Breast epithelium (tissue), 4 donors: ENCODE measurements at regions of chr22 and their contacts with region 1.

Region 1: DNA sequence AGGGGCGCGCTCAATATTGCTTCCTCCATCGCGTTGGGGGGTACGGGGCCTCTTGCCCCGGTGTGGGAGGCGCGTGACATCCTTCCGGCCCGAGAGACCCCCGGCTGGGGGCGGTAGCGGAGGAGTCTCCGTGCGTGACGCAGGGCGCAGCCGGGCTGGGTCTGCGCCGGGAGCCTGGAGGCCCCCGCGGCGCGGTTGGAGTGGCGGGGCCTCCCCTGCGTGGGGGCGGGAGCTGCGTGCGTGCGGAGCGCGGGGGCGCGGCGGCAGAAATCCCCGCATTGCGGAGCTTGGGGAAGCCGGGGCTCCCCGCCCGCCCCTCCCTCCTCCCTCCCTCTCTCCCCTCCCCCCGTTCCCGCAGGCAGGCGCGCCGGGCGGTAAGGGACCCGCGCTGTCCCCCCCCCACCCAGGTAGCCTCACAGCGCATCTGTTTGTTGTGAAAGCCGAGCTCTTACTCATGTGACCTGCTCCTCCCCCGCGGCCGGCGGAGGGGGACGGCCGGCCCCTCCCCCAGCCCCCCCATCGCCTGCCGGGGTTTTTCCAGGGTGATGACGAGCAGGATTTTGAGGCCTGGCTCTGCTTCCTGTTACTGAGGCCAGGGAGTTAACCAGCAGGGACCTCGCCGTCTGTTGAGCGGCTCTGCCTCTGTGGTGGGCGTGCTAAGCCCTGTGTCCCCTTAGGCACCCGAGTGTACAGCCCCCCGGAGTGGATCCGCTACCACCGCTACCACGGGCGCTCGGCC is 1.6 kb downstream of the PIM3 start:
- DNase-seq: peak; percentile 94 to 95
- H3K4me3 ChIP-seq: peak overlapping the region; percentile 73 to 95 (median 92)
- H3K27ac ChIP-seq: peak overlapping the region; percentile 96 to 99
- H3K4me1 ChIP-seq: peaks cover 36 to 49% of the 10 kb centered on the region in 2 donors
- H3K27me3 ChIP-seq: no peaks in the 10 kb centered on the region
- CTCF ChIP-seq: peak in 1 of 3 donors; percentile 21
- POLR2A ChIP-seq: no peak

Region 2: GRCh38 chr22:49934891-49935557 is 27.2 kb before region 1 on chr22:
- intact Hi-C with region 1: loop called (anchors 1 kb)
- DNase-seq: peak; percentile 69 to 81
- H3K4me3 ChIP-seq: peak overlapping the region; percentile 49 to 64 (median 52)
- H3K27ac ChIP-seq: peak overlapping the region; percentile 94 to 99
- H3K4me1 ChIP-seq: peaks cover 17 to 44% of the 10 kb centered on the region in 2 donors
- H3K27me3 ChIP-seq: no peaks in the 10 kb centered on the region
- CTCF ChIP-seq: no peak
- POLR2A ChIP-seq: no peak

Region 3: DNA sequence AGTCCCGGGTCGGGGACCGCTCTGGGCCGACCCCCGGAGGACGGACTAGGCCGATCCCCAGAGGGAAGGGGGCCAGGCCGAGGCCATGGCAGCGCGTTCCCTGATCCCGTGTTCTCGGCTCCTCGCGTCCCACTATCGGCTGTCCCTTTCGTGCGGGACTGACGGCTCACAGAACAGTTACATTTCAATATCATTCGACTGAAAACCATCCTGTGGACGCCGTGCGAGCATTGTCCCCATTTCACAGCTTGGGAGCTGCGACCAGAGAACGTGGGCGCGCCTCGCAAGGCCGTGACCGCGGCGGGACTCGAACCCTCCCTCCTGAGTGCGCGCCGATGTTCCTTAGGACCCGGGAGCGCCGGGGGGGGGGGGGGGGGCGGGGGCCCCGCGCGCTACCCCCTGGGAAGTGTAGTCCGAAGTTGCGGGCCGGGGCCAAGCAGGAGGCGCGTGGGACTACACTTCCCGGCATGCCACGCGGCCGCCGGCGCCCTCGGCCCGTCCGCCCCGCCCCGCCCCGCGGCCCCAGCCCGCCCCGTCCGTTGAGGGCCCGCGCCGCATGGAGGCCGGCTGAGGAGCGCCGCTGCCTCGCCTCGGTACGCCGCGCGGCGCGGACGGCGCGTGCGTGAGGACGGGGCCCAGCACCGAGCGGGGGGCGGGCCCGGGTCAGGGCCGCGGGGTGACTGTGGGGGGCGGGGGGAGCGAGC is 223.4 kb after region 1 on chr22 and contains the start of gene TRABD:
- intact Hi-C with region 1: loop called (anchors 10 kb)
- DNase-seq: peak; percentile 82 to 91
- H3K4me3 ChIP-seq: peak within 1 kb of the TSS; percentile 67 to 79 (median 75)
- H3K27ac ChIP-seq: peak within 1 kb of the TSS; percentile 69 to 75
- H3K4me1 ChIP-seq: peaks cover 12 to 17% of the 10 kb centered on the region in 2 donors
- H3K27me3 ChIP-seq: no peaks in the 10 kb centered on the region
- CTCF ChIP-seq: no peak
- POLR2A ChIP-seq: no peak
- total RNA-seq, gene TRABD: 17.3 to 35.7 (median 28.2) TPM

Region 4: GRCh38 chr22:50435291-50436014 is 473.3 kb after region 1 on chr22:
- intact Hi-C with region 1: no loop called
- DNase-seq: peak in 1 of 2 donors; percentile 73
- H3K4me3 ChIP-seq: no peak overlapping the region
- H3K27ac ChIP-seq: peak overlapping the region; percentile 19 to 50
- H3K4me1 ChIP-seq: no peaks in the 10 kb centered on the region
- H3K27me3 ChIP-seq: no peaks in the 10 kb centered on the region
- CTCF ChIP-seq: no peak
- POLR2A ChIP-seq: no peak